MCF 10A (cell line): ENCODE measurements at regions of chr3 and their contacts with region 1.

Region 1: DNA sequence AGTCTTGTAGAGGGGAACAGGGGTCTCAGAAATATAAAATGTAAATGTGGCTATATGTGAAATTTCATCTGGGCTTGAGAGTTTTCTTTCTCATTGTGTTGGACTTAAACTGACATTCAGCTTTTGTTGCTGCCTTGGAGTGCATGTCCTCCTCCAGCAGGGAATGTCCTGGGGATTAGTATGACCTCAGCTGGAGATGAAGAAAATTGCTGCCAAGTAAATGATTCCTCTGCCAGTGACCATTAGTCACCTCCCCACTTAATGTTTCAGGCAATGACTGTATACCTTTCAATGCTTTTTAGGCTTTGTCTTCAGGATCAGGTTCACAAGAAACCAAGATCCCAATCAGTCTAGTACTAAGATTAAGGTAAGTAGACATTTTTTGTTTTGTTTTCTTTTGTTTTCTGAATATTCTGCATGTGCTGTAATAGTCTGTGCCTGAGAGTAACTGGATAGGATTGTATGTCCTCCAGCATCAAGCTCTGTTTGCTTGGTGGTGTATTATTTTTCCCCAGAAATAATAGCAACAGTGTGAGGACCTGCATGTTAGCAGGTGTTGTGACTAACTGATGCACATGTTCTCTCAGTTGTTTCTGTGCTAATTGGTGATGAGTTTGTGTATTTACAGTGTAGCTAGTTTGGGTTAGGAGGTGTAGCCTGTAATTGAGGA is 18.1 kb upstream of the SLC22A13 start:
- DNase-seq: peak; percentile 84
- H3K4me3 Mint-ChIP-seq: no peak overlapping the region
- H3K27ac Mint-ChIP-seq: peak overlapping the region; percentile 54
- H3K4me1 Mint-ChIP-seq: peaks cover 12% of the 10 kb centered on the region
- H3K27me3 Mint-ChIP-seq: no peaks in the 10 kb centered on the region
- CTCF ChIP-seq: peak; percentile 30

Region 2: DNA sequence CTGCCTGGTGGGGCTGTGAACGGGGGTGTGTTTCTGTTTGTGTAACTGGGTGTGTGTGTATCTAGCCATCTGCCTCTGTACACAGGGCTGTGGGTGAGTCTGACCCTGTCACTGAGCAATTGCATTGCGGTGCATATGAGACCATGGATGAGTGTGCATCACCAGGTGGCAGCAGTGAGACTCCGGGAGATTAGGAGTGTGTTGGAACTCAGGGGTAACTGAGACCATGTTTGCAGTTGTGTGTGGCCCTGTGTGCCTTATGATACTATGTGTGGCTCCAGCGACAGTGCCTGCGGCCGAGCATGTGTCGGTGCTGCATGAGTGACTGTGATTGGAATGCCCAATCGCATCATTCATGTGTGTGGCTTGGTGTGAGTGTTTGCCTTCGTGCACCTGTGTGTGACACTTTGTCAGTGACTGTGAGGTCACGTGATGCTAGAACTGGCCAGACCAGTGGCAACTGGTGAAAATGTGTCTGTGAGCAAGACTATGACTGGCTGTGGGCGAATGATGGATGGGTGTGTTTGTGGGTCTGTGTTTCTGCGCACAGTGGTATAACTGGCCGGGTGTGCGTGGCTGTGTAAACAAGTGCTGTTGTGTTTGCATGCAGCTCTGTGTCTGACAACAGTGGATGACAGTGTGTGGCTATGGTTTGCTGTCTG is 243.0 kb before region 1 on chr3:
- CTCF ChIA-PET with region 1: interaction called, 5 read pairs
- POLR2A ChIA-PET with region 1: no interaction called
- intact Hi-C with region 1: loop called (anchors 1 kb)
- DNase-seq: peak; percentile 81
- H3K4me3 Mint-ChIP-seq: no peak overlapping the region
- H3K27ac Mint-ChIP-seq: no peak overlapping the region
- H3K4me1 Mint-ChIP-seq: peaks cover 23% of the 10 kb centered on the region
- H3K27me3 Mint-ChIP-seq: no peaks in the 10 kb centered on the region
- CTCF ChIP-seq: peak; percentile 69

Region 3: DNA sequence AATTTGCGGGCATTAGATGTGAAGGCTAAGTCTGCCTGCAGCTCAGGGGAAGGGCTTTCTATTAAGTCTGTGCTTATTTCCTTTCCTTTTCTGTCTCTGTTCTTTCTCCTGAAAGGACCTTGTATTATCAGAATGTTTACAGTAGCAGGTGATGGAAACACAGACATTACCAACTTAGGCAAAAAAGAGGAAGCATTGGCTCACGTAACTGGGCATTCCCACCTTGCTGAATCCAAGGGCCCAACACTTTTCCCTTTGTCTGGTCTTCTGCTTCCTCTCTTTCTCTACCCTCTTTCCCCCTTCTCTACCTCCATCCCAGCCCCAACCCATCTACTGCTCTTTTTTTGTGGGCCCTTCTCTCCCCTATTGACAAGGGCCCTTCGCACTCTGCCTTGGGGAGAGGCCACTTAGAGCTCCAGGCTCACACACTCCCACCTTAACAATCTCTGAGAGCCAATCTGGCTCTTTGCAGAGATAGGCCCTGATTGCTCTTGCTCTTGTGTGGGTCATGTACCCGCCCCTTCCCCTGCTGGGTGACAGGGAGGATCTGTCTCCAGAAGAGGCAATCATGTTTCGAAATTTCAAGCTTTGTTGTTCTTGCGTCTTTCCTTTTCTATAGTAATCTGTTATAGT is 145.6 kb before region 1 on chr3:
- CTCF ChIA-PET with region 1: no interaction called
- POLR2A ChIA-PET with region 1: no interaction called
- intact Hi-C with region 1: no loop called
- DNase-seq: no peak
- H3K4me3 Mint-ChIP-seq: no peak overlapping the region
- H3K27ac Mint-ChIP-seq: no peak overlapping the region
- H3K4me1 Mint-ChIP-seq: no peaks in the 10 kb centered on the region
- H3K27me3 Mint-ChIP-seq: peaks cover 28% of the 10 kb centered on the region
- CTCF ChIP-seq: no peak

Region 4: DNA sequence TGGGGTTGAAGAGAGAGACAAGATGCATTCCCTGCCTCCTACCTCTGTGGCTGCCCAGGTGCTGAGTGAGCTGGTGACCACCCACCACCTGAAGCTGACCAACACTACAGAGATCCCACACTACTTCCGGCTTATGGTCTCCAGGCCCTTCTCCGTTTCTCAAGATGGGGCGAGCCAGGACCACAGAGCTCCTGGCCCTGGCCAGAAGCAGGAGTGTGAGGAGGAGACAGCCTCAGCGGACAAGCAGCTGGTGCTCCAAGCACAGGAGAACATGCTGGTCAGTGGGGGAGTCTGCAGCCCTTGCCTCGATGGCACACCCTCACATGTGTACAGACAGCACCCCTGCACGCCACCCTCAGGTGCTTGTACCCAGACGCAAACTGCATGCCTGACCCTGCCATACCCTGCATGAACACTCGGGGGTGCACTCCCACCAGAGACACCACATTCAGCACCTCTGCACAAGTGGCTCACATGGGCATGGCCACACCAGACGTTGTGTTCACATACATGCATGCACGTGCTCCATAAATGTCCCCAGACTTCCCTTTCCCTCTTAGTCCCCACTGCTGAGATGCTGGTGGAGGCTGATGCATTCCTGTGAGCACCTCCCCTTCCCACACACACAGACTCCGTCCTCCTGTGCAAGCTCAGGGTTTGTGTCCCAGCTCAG is 129.6 kb before region 1 on chr3:
- CTCF ChIA-PET with region 1: interaction called, 20 read pairs
- POLR2A ChIA-PET with region 1: interaction called, 7 read pairs
- intact Hi-C with region 1: loop called (anchors 1 kb)
- DNase-seq: peak; percentile 65
- H3K4me3 Mint-ChIP-seq: no peak overlapping the region
- H3K27ac Mint-ChIP-seq: no peak overlapping the region
- H3K4me1 Mint-ChIP-seq: no peaks in the 10 kb centered on the region
- H3K27me3 Mint-ChIP-seq: peaks cover 12% of the 10 kb centered on the region
- CTCF ChIP-seq: peak; percentile 70

Region 5: DNA sequence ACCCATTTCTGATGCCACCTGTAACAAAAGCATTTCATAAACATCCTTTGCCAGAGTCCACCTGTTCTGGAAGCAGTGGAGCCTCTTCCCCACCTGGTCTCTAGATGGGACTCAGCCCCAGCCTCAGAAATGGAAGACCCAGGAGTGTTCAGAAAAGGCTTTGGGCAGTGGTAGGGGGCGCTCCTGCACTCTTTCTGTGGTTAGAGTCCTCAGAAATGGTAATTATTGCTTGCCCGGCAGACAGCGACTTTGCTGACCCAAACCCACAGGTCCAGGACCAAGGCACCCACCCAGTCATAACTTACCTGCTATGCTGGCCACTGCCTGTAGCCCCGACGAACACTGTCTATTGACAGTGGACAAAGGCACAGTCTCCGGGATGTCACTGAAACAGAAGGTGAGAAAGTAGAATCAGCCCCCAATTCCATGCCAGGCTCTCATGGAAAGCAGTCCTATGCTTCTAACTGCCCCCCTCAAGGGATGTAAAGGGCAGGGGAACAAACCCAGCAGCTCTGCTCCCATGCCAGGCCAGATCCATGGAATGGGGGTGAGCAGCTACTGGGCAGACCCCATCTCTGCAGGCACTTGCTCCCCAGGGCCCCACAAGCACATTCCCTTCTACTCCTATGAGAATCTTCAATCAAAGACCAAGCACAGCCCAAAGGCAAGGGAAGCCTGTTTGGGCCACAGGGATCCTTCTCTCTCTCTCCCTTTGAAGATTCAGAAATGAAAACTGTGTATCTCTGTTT is 115.7 kb before region 1 on chr3:
- CTCF ChIA-PET with region 1: interaction called, 9 read pairs
- POLR2A ChIA-PET with region 1: interaction called, 30 read pairs
- intact Hi-C with region 1: loop called (anchors 1 kb)
- DNase-seq: peak; percentile 60
- H3K4me3 Mint-ChIP-seq: no peak overlapping the region
- H3K27ac Mint-ChIP-seq: no peak overlapping the region
- H3K4me1 Mint-ChIP-seq: peaks cover 30% of the 10 kb centered on the region
- H3K27me3 Mint-ChIP-seq: no peaks in the 10 kb centered on the region
- CTCF ChIP-seq: peak; percentile 51

Region 6: GRCh38 chr3:38136777-38137614 is 110.5 kb before region 1 on chr3 and contains the start of gene ACAA1:
- CTCF ChIA-PET with region 1: interaction called, 9 read pairs
- POLR2A ChIA-PET with region 1: interaction called, 30 read pairs
- intact Hi-C with region 1: loop called (anchors 1 kb)
- DNase-seq: peak; percentile 99
- H3K4me3 Mint-ChIP-seq: peak within 1 kb of the TSS; percentile 81
- H3K27ac Mint-ChIP-seq: peak within 1 kb of the TSS; percentile 71
- H3K4me1 Mint-ChIP-seq: peaks cover 51% of the 10 kb centered on the region
- H3K27me3 Mint-ChIP-seq: no peaks in the 10 kb centered on the region
- CTCF ChIP-seq: no peak
- total RNA-seq, gene ACAA1: 36.6 and 46.7 TPM in 2 replicates

Region 7: GRCh38 chr3:38164966-38165680 is 82.4 kb before region 1 on chr3 and contains the start of gene OXSR1:
- CTCF ChIA-PET with region 1: interaction called, 8 read pairs
- POLR2A ChIA-PET with region 1: interaction called, 14 read pairs
- intact Hi-C with region 1: loop called (anchors 1 kb)
- DNase-seq: peak; percentile 99
- H3K4me3 Mint-ChIP-seq: peak within 1 kb of the TSS; percentile 87
- H3K27ac Mint-ChIP-seq: peak within 1 kb of the TSS; percentile 93
- H3K4me1 Mint-ChIP-seq: peaks cover 29% of the 10 kb centered on the region
- H3K27me3 Mint-ChIP-seq: no peaks in the 10 kb centered on the region
- CTCF ChIP-seq: no peak
- total RNA-seq, gene OXSR1: 71.7 and 75.5 TPM in 2 replicates

Region 8: DNA sequence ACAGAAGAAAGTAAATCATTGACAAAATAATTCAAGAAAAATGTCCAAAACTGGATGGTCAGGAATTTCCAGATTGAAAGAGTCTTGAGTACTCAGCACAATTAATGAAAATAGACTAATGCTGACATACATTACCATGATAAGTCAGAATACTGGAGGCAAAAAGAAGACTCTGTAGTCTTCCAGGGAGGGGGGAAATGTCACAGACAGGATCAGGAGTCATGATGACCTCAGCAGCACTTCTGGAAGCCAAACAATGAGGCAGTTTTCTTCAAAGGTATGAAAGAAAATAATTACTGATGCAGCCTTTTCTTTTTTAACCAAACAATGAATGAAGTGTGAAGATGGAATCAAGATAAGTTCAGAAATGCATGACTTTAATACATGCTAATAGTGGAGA is 12.0 kb before region 1 on chr3:
- CTCF ChIA-PET with region 1: interaction called, 12 read pairs
- POLR2A ChIA-PET with region 1: interaction called, 4 read pairs
- intact Hi-C with region 1: no loop called
- DNase-seq: no peak
- H3K4me3 Mint-ChIP-seq: no peak overlapping the region
- H3K27ac Mint-ChIP-seq: no peak overlapping the region
- H3K4me1 Mint-ChIP-seq: no peaks in the 10 kb centered on the region
- H3K27me3 Mint-ChIP-seq: no peaks in the 10 kb centered on the region
- CTCF ChIP-seq: no peak